ENCODE measurements at regions of chr1 and their contacts with region 1.

Region 1: GRCh38 chr1:23344111-23344986 is at the start of gene HNRNPR:
- DNase-seq: peak; percentile 100
- ATAC-seq: peak; percentile 96 to 98 (median 96)
- H3K4me3 ChIP-seq: peak within 1 kb of the TSS; percentile 91
- H3K27ac ChIP-seq: peak within 1 kb of the TSS; percentile 97
- H3K4me1 ChIP-seq: peaks cover 36% of the 10 kb centered on the region
- H3K27me3 ChIP-seq: no peaks in the 10 kb centered on the region
- CTCF ChIP-seq: peak; percentile 9
- total RNA-seq, gene HNRNPR: 39.8 to 81.0 (median 71.4) TPM

Region 2: GRCh38 chr1:23367791-23368561 is 23.6 kb after region 1 on chr1:
- intact Hi-C with region 1: loop called (anchors 1 to 2 kb)
- DNase-seq: peak; percentile 99
- ATAC-seq: peak; percentile 91 to 93 (median 92)
- H3K4me3 ChIP-seq: peak overlapping the region; percentile 89
- H3K27ac ChIP-seq: peak overlapping the region; percentile 98
- H3K4me1 ChIP-seq: peaks cover 42% of the 10 kb centered on the region
- H3K27me3 ChIP-seq: no peaks in the 10 kb centered on the region
- CTCF ChIP-seq: no peak

Region 3: GRCh38 chr1:23403735-23404486 is 59.6 kb after region 1 on chr1:
- intact Hi-C with region 1: loop called in 1 of 2 experiments (anchors 2 kb)
- DNase-seq: peak; percentile 84 to 92
- ATAC-seq: peak; percentile 77 to 81 (median 80)
- H3K4me3 ChIP-seq: no peak overlapping the region
- H3K27ac ChIP-seq: peak overlapping the region; percentile 75
- H3K4me1 ChIP-seq: peaks cover 54% of the 10 kb centered on the region
- H3K27me3 ChIP-seq: no peaks in the 10 kb centered on the region
- CTCF ChIP-seq: peak; percentile 93

Region 4: DNA sequence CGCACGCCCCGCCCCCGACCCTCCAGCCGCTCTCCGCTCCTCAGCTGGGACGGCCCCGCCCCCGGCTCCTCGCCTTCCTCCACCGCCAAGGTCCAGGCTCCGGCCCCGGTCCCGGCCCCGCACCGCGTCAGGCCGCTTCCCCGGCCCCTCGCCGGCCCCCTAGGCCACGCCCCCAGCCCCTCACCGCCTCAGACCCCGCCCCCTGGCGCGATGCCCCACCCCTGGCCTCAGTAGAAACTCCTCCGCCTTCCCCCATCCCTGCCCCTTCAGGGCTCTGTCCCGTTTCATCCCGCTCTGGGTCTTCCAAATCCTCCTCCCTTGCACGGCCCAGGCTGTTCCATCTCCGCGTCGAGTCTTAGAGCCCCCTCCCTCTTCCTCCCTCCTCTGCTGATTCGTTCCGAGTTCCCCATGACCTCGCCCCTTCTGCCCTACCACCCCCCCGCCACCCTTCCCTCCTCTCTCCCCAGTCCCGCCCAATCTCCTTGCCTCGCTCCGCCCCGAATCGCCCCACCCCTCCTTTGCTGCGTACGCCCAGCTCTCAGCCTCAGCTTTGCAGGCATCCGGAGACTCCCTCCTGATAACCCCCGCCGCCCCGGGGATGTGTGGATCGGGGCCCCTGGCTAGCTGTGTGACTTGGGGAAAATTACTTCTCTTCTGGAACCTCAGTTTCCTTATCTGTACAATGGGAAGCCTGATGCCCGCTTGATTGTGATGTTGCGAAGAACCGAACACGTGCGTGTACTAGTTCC is 140.1 kb after region 1 on chr1:
- intact Hi-C with region 1: loop called in 1 of 2 experiments (anchors 10 kb)
- DNase-seq: peak; percentile 96 to 98
- ATAC-seq: peak; percentile 84 to 90 (median 88)
- H3K4me3 ChIP-seq: peak overlapping the region; percentile 76
- H3K27ac ChIP-seq: peak overlapping the region; percentile 87
- H3K4me1 ChIP-seq: peaks cover 39% of the 10 kb centered on the region
- H3K27me3 ChIP-seq: no peaks in the 10 kb centered on the region
- CTCF ChIP-seq: no peak